Heart right ventricle (tissue), 16 donors: ENCODE measurements at regions of chr22 and their contacts with region 1.

Region 1: DNA sequence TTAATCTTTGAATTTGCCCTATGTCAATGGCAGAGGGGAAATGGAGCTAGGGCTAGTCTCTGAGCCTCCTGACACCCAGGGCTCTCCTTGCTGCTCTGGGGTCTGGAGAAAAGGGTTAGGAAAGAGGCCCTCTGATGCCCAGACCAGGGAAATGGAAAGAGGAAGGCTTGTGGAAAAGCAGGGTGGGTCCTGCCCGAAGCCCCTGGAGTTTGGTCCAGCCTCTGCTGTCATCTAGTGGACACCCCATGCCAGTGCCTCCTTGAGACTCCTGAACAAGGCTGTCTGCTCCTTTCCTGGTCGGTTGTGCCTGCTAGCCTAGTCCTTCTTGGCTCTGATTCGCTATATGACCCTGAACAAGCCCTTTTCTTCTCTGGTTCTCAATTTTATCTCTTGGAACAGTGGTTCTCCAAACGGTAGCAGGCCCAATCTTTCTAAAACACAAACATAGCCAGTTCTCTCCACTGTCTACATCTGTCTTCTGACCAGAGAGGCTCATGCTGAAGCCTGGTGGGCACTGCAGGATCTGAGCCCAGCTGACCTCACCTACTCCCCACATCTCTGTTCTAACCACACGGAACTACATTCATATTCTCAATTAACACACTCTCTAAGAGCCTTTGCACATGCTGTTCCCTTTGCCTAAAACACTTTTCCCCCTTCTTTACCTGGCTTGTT is 8.8 kb upstream of the PLA2G3 start:
- DNase-seq: peak; percentile 72 to 84
- ATAC-seq: peak; percentile 92 to 99 (median 96)
- H3K4me3 ChIP-seq: no peak overlapping the region
- H3K27ac ChIP-seq: peak overlapping the region; percentile 2 to 82 (median 77)
- H3K4me1 ChIP-seq: peaks cover 0 to 20% (median 12%) of the 10 kb centered on the region in 9 donors
- H3K27me3 ChIP-seq: no peaks in the 10 kb centered on the region
- CTCF ChIP-seq: peak in 8 of 9 donors; percentile 83 to 97 (median 92)

Region 2: GRCh38 chr22:30606455-30607299 is 542.4 kb before region 1 on chr22 and contains the start of gene TCN2:
- intact Hi-C with region 1: no loop called
- DNase-seq: peak; percentile 62 to 76
- ATAC-seq: peak; percentile 78 to 91 (median 87)
- H3K4me3 ChIP-seq: peak within 1 kb of the TSS; percentile 29 to 88 (median 66)
- H3K27ac ChIP-seq: peak within 1 kb of the TSS; percentile 65 to 92 (median 84)
- H3K4me1 ChIP-seq: peaks cover 6 to 58% (median 42%) of the 10 kb centered on the region in 9 donors
- H3K27me3 ChIP-seq: no peaks in the 10 kb centered on the region
- CTCF ChIP-seq: peak in 2 of 9 donors; percentile 16 to 19
- total RNA-seq, gene TCN2: 8.9 to 46.8 (median 14.8) TPM

Region 3: GRCh38 chr22:30763815-30764686 is 385.0 kb before region 1 on chr22:
- intact Hi-C with region 1: loop called in 7 of 10 experiments (anchors 5 to 10 kb)
- DNase-seq: peak in 1 of 2 donors; percentile 60
- ATAC-seq: peak in 7 of 8 donors; percentile 47 to 82 (median 70)
- H3K4me3 ChIP-seq: no peak overlapping the region
- H3K27ac ChIP-seq: no peak overlapping the region
- H3K4me1 ChIP-seq: peaks cover 0 to 6% (median 0%) of the 10 kb centered on the region in 9 donors
- H3K27me3 ChIP-seq: no peaks in the 10 kb centered on the region
- CTCF ChIP-seq: peak; percentile 32 to 75 (median 68)

Region 4: DNA sequence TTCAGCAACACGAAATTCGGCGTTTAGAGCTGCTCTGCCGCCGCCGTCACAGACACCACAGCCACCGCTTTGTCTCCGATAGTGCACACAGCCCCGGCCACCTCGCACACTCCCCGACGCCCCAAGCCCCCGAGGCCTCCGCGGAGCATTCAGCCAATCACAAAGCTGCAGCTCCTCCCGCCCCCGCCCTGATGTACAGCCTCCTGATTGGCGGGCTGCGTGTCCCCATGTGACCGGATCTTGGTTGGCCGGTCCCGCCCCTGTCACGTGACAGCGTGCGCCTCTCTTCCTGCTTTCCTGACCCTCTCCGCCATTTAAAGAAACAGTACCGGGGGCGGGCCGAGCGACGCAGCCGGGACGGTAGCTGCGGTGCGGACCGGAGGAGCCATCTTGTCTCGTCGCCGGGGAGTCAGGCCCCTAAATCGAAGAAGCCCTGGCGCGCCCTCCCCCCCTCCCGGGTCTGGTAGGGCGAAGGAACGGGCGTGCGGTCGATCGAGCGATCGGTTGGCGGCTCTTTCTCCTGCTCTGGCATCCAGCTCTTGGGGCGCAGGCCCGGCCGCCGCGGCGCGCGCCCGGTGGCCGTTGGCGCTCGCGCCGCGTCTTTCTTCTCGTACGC is 180.1 kb before region 1 on chr22 and contains the start of gene TUG1:
- intact Hi-C with region 1: loop called in 1 of 10 experiments (anchors 5 kb)
- DNase-seq: peak; percentile 98 to 99
- ATAC-seq: peak; percentile 97 to 100 (median 98)
- H3K4me3 ChIP-seq: peak within 1 kb of the TSS; percentile 76 to 91 (median 84)
- H3K27ac ChIP-seq: peak within 1 kb of the TSS; percentile 88 to 99 (median 96)
- H3K4me1 ChIP-seq: peaks cover 4 to 59% (median 39%) of the 10 kb centered on the region in 9 donors
- H3K27me3 ChIP-seq: no peaks in the 10 kb centered on the region
- CTCF ChIP-seq: no peak
- total RNA-seq, gene TUG1: 37.7 to 48.4 (median 44.2) TPM

Region 5: GRCh38 chr22:31089160-31090100 is 59.7 kb before region 1 on chr22:
- intact Hi-C with region 1: loop called in 9 of 10 experiments (anchors 1 to 10 kb)
- DNase-seq: peak; percentile 5 to 71
- ATAC-seq: peak in 4 of 8 donors; percentile 7 to 22 (median 20)
- H3K4me3 ChIP-seq: no peak overlapping the region
- H3K27ac ChIP-seq: peak overlapping the region in 8 of 10 donors; percentile 24 to 65 (median 40)
- H3K4me1 ChIP-seq: peaks cover 3 to 80% (median 43%) of the 10 kb centered on the region in 9 donors
- H3K27me3 ChIP-seq: no peaks in the 10 kb centered on the region
- CTCF ChIP-seq: peak; percentile 69 to 89 (median 82)

Region 6: GRCh38 chr22:31451709-31452571 is 302.9 kb after region 1 on chr22:
- intact Hi-C with region 1: no loop called
- DNase-seq: no peak
- ATAC-seq: peak in 2 of 8 donors; percentile 13 to 44
- H3K4me3 ChIP-seq: no peak overlapping the region
- H3K27ac ChIP-seq: no peak overlapping the region
- H3K4me1 ChIP-seq: peaks cover 0 to 42% (median 9%) of the 10 kb centered on the region in 9 donors
- H3K27me3 ChIP-seq: no peaks in the 10 kb centered on the region
- CTCF ChIP-seq: peak in 7 of 9 donors; percentile 20 to 51 (median 47)